CD8-positive, alpha-beta T cell (primary cell): ENCODE measurements at regions of chr20 and their contacts with region 1.

Region 1: GRCh38 chr20:31879143-31879987 is 8.9 kb downstream of the TTLL9 start:
- DNase-seq: peak; percentile 50 to 90 (median 74)
- ATAC-seq: peak; percentile 84
- H3K4me3 ChIP-seq: peak overlapping the region; percentile 59 to 73
- H3K4me3 Mint-ChIP-seq: peak overlapping the region; percentile 91
- H3K27ac ChIP-seq: no peak overlapping the region
- H3K27ac Mint-ChIP-seq: peak overlapping the region; percentile 63
- H3K4me1 ChIP-seq: no peaks in the 10 kb centered on the region
- H3K4me1 Mint-ChIP-seq: peaks cover 11% of the 10 kb centered on the region
- H3K27me3 ChIP-seq: no peaks in the 10 kb centered on the region
- H3K27me3 Mint-ChIP-seq: peaks cover 3% of the 10 kb centered on the region
- CTCF ChIP-seq: no peak

Region 2: DNA sequence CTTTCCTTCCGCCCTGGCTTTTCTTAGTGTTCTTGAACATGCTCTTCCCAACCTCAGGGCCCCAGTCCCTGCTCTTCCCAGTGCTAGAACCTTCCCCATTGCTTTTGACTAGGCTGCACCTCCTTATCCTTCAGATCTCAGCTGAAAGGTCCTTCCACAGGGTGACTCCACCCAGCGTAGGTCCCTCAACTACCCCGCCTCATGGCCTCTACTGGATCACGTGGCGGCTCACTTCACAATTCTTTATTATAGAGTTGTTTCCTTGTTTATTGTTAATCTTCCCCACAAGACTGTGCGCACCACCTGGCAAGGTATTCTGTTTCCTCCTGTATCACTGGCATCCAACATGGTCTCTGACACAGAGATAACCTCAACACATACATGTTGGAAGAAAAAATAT is 22.2 kb after region 1 on chr20:
- CTCF ChIA-PET with region 1: no interaction called
- POLR2A ChIA-PET with region 1: no interaction called
- intact Hi-C with region 1: loop called in 1 of 2 experiments (anchors 1 kb)
- DNase-seq: no peak
- ATAC-seq: no peak
- H3K4me3 ChIP-seq: no peak overlapping the region
- H3K4me3 Mint-ChIP-seq: no peak overlapping the region
- H3K27ac ChIP-seq: no peak overlapping the region
- H3K27ac Mint-ChIP-seq: no peak overlapping the region
- H3K4me1 ChIP-seq: no peaks in the 10 kb centered on the region
- H3K4me1 Mint-ChIP-seq: no peaks in the 10 kb centered on the region
- H3K27me3 ChIP-seq: no peaks in the 10 kb centered on the region
- H3K27me3 Mint-ChIP-seq: peaks cover 19% of the 10 kb centered on the region
- CTCF ChIP-seq: no peak